ENCODE measurements at regions of chr7 and their contacts with region 1.

Region 1: GRCh38 chr7:139771001-139771970 is 6.5 kb downstream of the HIPK2 start:
- DNase-seq: no peak
- ATAC-seq: no peak
- H3K4me3 ChIP-seq: no peak overlapping the region
- H3K4me3 Mint-ChIP-seq: peak overlapping the region; percentile 1 to 21 (median 9)
- H3K27ac ChIP-seq: no peak overlapping the region
- H3K27ac Mint-ChIP-seq: peak overlapping the region; percentile 79 to 99
- H3K4me1 ChIP-seq: peaks cover 58 to 63% of the 10 kb centered on the region in 2 experiments
- H3K4me1 Mint-ChIP-seq: peaks cover 91 to 94% (median 93%) of the 10 kb centered on the region in 3 donors
- H3K27me3 ChIP-seq: no peaks in the 10 kb centered on the region
- H3K27me3 Mint-ChIP-seq: no peaks in the 10 kb centered on the region

Region 2: DNA sequence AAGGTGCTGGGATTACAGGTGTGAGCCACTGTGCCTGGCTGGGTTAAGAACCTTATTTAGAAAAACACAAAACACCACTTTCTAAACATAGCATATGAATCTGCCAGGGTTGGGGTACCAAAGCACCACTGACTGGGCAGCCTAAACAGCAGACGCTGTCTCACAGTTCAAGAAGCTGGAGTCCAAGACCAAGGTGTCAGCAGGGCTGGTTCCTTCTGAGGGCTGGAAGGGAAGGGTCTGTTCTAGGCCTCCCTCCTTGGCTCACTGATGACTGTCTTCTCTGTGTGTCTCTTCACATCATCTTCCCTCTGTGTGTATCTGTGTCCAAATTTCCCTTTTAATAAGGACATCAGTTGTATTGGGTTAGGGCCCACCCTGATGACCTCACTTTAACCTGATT is 43.1 kb before region 1 on chr7:
- CTCF ChIA-PET with region 1: interaction called in 1 of 2 experiments, 13 read pairs
- POLR2A ChIA-PET with region 1: interaction called in 1 of 2 experiments, 3 read pairs
- DNase-seq: no peak
- ATAC-seq: no peak
- H3K4me3 ChIP-seq: no peak overlapping the region
- H3K4me3 Mint-ChIP-seq: no peak overlapping the region
- H3K27ac ChIP-seq: no peak overlapping the region
- H3K27ac Mint-ChIP-seq: no peak overlapping the region
- H3K4me1 ChIP-seq: peaks cover 14 to 26% of the 10 kb centered on the region in 2 experiments
- H3K4me1 Mint-ChIP-seq: peaks cover 70 to 75% (median 72%) of the 10 kb centered on the region in 3 donors
- H3K27me3 ChIP-seq: no peaks in the 10 kb centered on the region
- H3K27me3 Mint-ChIP-seq: no peaks in the 10 kb centered on the region

Measured in T-cell (primary cell).